OCI-LY7 (cell line): ENCODE measurements at regions of chr6 and their contacts with region 1.

Region 1: GRCh38 chr6:44456070-44456965 is 68.8 kb downstream of the CDC5L start:
- DNase-seq: peak; percentile 66
- H3K4me3 ChIP-seq: no peak overlapping the region
- H3K27ac ChIP-seq: no peak overlapping the region
- H3K4me1 ChIP-seq: no peaks in the 10 kb centered on the region
- CTCF ChIP-seq: peak; percentile 89

Region 2: DNA sequence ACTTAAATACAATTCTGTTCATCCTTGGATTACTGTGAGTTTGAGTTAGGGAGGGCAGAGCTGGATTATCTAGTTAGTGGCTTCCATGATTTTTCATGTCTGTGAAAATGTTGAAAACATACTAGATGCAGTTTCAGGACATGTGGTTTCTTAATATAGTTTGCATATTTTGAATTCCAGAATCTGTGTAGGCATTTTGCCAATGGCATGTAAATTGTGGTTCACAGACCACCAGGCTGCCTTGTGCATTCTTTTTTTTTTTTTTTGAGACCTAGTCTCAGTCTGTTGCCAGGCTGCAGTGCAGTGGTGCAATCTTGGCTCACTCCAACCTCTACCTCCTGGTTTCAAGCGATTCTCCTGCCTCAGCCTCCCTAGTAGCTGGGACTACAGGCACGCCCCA is 26.0 kb before region 1 on chr6:
- CTCF ChIA-PET with region 1: no interaction called
- POLR2A ChIA-PET with region 1: interaction called, 4 read pairs
- intact Hi-C with region 1: loop called (anchors 1 kb)
- DNase-seq: no peak
- H3K4me3 ChIP-seq: no peak overlapping the region
- H3K27ac ChIP-seq: no peak overlapping the region
- H3K4me1 ChIP-seq: no peaks in the 10 kb centered on the region
- CTCF ChIP-seq: no peak